Pancreas (tissue), 10 donors: ENCODE measurements at regions of chr11 and their contacts with region 1.

Region 1: GRCh38 chr11:94593030-94593429 is 25.9 kb downstream of the PIWIL4 start:
- DNase-seq: no peak
- ATAC-seq: peak in 1 of 4 donors; percentile 60
- H3K4me3 ChIP-seq: no peak overlapping the region
- H3K27ac ChIP-seq: no peak overlapping the region
- H3K4me1 ChIP-seq: no peaks in the 10 kb centered on the region
- H3K27me3 ChIP-seq: no peaks in the 10 kb centered on the region
- CTCF ChIP-seq: no peak

Region 2: GRCh38 chr11:94519478-94520084 is 73.4 kb before region 1 on chr11:
- intact Hi-C with region 1: loop called in 1 of 3 experiments (anchors 10 kb)
- DNase-seq: no peak
- ATAC-seq: peak in 3 of 4 donors; percentile 67 to 81 (median 77)
- H3K4me3 ChIP-seq: no peak overlapping the region
- H3K27ac ChIP-seq: no peak overlapping the region
- H3K4me1 ChIP-seq: no peaks in the 10 kb centered on the region
- H3K27me3 ChIP-seq: peaks cover 0 to 3% (median 0%) of the 10 kb centered on the region in 4 donors
- CTCF ChIP-seq: peak in 3 of 4 donors; percentile 25 to 55 (median 49)